Left colon (tissue), 2 donors: ENCODE measurements at regions of chr1 and their contacts with region 1.

Region 1: GRCh38 chr1:225597926-225598575 is 54.9 kb downstream of the ENAH start:
- DNase-seq: no peak
- ATAC-seq: no peak

Region 2: DNA sequence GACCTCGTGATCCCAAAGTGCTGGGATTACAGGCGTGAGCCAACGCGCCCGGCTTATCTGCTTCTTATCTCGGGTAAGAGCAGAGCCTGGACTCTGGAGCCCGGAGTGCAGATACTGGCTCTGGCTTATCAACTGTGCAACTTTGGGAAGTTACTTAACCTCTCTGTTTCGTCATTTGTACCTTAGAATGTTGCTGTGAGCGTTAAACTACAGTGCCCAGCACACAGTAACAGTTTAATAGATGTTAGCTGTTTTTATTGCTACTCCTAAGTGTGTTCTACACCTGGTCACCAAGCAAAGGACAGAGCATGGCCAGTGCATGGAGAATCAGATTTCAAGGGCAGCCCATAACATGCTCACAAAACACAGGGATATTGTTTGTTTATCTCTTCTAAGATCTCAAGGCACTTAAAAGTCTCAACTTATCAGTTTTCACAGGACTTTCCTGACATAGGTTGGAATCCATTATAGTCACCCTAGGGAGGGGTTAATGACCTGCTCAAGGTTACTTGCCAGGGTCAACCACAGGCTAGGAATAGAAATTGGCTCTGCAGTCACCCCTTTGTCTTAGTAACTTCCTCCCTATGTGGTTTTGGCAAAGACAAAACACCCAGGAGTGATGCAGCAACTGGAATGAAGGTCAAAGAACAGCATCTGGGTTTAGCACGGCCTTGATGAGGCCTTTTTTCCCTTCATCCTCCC is 157.0 kb after region 1 on chr1:
- intact Hi-C with region 1: loop called in 1 of 2 experiments (anchors 5 kb)
- DNase-seq: no peak
- ATAC-seq: peak; percentile 82